ENCODE measurements at regions of chr14 and their contacts with region 1.

Region 1: GRCh38 chr14:60980811-60981632 is at the starts of genes SLC38A6 and TRMT5:
- DNase-seq: peak; percentile 92
- H3K4me3 Mint-ChIP-seq: no peak within 1 kb of the TSS
- H3K27ac Mint-ChIP-seq: no peak within 1 kb of the TSS
- H3K4me1 Mint-ChIP-seq: peaks cover 9% of the 10 kb centered on the region
- H3K27me3 Mint-ChIP-seq: no peaks in the 10 kb centered on the region
- CTCF ChIP-seq: no peak
- total RNA-seq, gene SLC38A6: 9.9 and 13.4 TPM in 2 replicates
- total RNA-seq, gene TRMT5: 20.3 and 22.8 TPM in 2 replicates

Region 2: DNA sequence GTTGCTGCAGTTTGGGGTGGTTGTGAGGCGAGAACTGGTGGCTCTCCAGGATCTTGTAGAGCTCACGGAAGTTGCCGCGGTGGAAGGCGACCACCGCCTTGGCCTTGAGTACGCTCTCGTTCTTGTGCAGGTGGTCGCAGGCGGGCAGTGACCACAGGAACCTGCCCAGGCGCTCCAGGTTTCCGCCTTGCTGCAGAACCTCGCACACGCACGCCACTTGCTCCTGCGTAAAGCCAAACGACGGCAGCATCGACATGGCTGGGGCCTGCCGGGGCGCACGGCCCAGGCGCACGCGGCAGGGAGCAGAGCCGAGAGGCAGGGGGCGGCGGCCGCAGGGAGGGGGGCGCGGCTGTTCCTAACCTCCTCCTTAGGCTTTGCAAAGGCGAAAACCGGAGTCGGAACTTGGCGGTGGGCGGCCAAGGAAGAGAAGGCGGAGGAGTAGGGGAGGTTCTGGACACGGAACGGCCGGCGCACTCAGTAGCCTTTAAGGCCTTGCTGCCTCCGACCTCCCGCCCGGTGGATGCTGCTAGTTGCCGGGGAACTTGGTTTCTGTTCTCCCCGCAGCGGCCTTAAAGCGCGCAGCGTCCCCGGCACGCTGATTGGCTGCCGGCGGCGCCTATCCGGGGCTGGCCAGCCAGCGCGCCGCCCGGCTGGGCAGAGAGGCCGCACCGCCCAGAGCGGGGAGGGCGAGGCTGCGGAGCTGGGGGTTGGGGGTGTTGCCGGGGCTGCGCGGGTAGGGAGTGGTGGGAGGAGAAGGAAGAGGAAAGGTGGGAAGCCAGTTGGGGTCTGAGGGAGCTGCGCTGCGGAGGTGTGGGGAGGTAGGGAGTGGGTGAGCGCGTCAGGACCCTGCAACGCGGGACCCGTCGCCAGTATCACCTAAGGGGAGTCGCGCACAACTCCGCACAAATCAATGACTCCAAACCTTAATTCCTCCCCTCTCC is 331.8 kb before region 1 on chr14 and contains the start of gene SIX1:
- CTCF ChIA-PET with region 1: no interaction called
- intact Hi-C with region 1: loop called (anchors 5 kb)
- DNase-seq: peak; percentile 86
- H3K4me3 Mint-ChIP-seq: peak within 1 kb of the TSS; percentile 75
- H3K27ac Mint-ChIP-seq: peak within 1 kb of the TSS; percentile 6
- H3K4me1 Mint-ChIP-seq: peaks cover 18% of the 10 kb centered on the region
- H3K27me3 Mint-ChIP-seq: peaks cover 49% of the 10 kb centered on the region
- CTCF ChIP-seq: no peak
- total RNA-seq, gene SIX1: 4.6 and 6.7 TPM in 2 replicates

Region 3: GRCh38 chr14:60839657-60840056 is 141.4 kb before region 1 on chr14:
- CTCF ChIA-PET with region 1: no interaction called
- intact Hi-C with region 1: no loop called
- DNase-seq: no peak
- H3K4me3 Mint-ChIP-seq: no peak overlapping the region
- H3K27ac Mint-ChIP-seq: no peak overlapping the region
- H3K4me1 Mint-ChIP-seq: no peaks in the 10 kb centered on the region
- H3K27me3 Mint-ChIP-seq: no peaks in the 10 kb centered on the region
- CTCF ChIP-seq: no peak

Region 4: GRCh38 chr14:61188978-61189808 is 208.2 kb after region 1 on chr14:
- CTCF ChIA-PET with region 1: no interaction called
- intact Hi-C with region 1: no loop called
- DNase-seq: peak; percentile 83
- H3K4me3 Mint-ChIP-seq: peak overlapping the region; percentile 50
- H3K27ac Mint-ChIP-seq: peak overlapping the region; percentile 69
- H3K4me1 Mint-ChIP-seq: peaks cover 13% of the 10 kb centered on the region
- H3K27me3 Mint-ChIP-seq: no peaks in the 10 kb centered on the region
- CTCF ChIP-seq: peak; percentile 40